CD4-positive, alpha-beta memory T cell (primary cell): ENCODE measurements at regions of chr3 and their contacts with region 1.

Region 1: GRCh38 chr3:41961750-41962679 is at the start of gene ULK4:
- DNase-seq: peak; percentile 95 to 97 (median 96)
- H3K4me3 ChIP-seq: peak within 1 kb of the TSS; percentile 59 to 93
- H3K4me3 Mint-ChIP-seq: peak within 1 kb of the TSS; percentile 99 to 100 (median 99)
- H3K27ac ChIP-seq: peak within 1 kb of the TSS; percentile 82
- H3K27ac Mint-ChIP-seq: peak within 1 kb of the TSS; percentile 97 to 99 (median 99)
- H3K4me1 ChIP-seq: peaks cover 15% of the 10 kb centered on the region
- H3K4me1 Mint-ChIP-seq: peaks cover 14 to 28% (median 21%) of the 10 kb centered on the region in 4 donors
- H3K27me3 ChIP-seq: no peaks in the 10 kb centered on the region
- H3K27me3 Mint-ChIP-seq: no peaks in the 10 kb centered on the region
- total RNA-seq, gene ULK4: 27.4 to 29.1 TPM

Region 2: GRCh38 chr3:40309418-40309924 is 1652.5 kb before region 1 on chr3 and contains the start of gene EIF1B:
- CTCF ChIA-PET with region 1: no interaction called
- POLR2A ChIA-PET with region 1: interaction called, 5 read pairs
- intact Hi-C with region 1: loop called (anchors 1 kb)
- DNase-seq: peak; percentile 96 to 99 (median 98)
- H3K4me3 ChIP-seq: peak within 1 kb of the TSS; percentile 68 to 77
- H3K4me3 Mint-ChIP-seq: peak within 1 kb of the TSS; percentile 98 to 100 (median 100)
- H3K27ac ChIP-seq: peak within 1 kb of the TSS; percentile 95
- H3K27ac Mint-ChIP-seq: peak within 1 kb of the TSS; percentile 99 to 100 (median 100)
- H3K4me1 ChIP-seq: peaks cover 32% of the 10 kb centered on the region
- H3K4me1 Mint-ChIP-seq: peaks cover 13 to 48% (median 25%) of the 10 kb centered on the region in 4 donors
- H3K27me3 ChIP-seq: no peaks in the 10 kb centered on the region
- H3K27me3 Mint-ChIP-seq: no peaks in the 10 kb centered on the region
- total RNA-seq, gene EIF1B: 61.2 TPM

Region 3: DNA sequence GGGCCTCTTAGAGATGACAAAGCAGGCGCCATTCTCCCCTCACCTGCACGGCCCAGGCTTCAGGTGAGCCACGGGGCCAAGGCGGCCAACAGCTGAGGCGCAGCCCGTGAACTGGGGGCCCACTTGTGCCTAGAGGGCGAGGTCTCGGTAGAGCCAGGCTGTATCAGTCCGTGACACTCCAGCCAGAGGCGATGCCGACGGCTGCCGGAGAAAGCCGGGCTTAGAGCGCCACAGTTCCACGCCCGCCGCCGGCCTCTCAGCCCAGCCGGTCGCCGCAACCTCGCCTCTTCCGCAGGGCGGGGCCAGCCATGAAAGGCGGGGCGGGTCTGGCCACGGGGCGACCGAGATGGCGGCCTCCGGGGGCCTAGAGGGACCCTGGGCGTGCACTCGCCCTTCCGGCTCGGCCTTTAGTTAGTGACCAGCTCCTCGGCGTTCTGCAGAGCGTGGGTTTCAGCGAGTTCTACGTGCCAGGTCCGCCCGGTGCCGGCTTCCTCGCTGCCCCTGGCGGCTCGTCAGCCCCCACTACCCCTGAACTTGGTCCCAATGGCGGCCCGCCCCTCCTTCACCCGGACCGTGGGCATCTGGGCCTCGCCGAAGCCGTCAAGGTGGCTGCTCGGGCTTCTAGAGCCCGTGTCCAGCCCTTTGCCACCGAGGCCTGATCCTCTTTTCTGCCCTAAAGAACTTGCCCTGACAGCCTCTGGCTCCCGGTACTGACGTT is 1437.3 kb before region 1 on chr3 and contains the start of gene ZNF621:
- CTCF ChIA-PET with region 1: no interaction called
- POLR2A ChIA-PET with region 1: no interaction called
- intact Hi-C with region 1: loop called (anchors 5 kb)
- DNase-seq: peak; percentile 67 to 83 (median 77)
- H3K4me3 ChIP-seq: peak within 1 kb of the TSS; percentile 62 to 89
- H3K4me3 Mint-ChIP-seq: peak within 1 kb of the TSS; percentile 92 to 97 (median 95)
- H3K27ac ChIP-seq: peak within 1 kb of the TSS; percentile 75
- H3K27ac Mint-ChIP-seq: peak within 1 kb of the TSS; percentile 79 to 98 (median 97)
- H3K4me1 ChIP-seq: peaks cover 21% of the 10 kb centered on the region
- H3K4me1 Mint-ChIP-seq: peaks cover 19 to 34% (median 28%) of the 10 kb centered on the region in 4 donors
- H3K27me3 ChIP-seq: no peaks in the 10 kb centered on the region
- H3K27me3 Mint-ChIP-seq: no peaks in the 10 kb centered on the region
- total RNA-seq, gene ZNF621: 23.7 to 27.4 TPM

Region 4: DNA sequence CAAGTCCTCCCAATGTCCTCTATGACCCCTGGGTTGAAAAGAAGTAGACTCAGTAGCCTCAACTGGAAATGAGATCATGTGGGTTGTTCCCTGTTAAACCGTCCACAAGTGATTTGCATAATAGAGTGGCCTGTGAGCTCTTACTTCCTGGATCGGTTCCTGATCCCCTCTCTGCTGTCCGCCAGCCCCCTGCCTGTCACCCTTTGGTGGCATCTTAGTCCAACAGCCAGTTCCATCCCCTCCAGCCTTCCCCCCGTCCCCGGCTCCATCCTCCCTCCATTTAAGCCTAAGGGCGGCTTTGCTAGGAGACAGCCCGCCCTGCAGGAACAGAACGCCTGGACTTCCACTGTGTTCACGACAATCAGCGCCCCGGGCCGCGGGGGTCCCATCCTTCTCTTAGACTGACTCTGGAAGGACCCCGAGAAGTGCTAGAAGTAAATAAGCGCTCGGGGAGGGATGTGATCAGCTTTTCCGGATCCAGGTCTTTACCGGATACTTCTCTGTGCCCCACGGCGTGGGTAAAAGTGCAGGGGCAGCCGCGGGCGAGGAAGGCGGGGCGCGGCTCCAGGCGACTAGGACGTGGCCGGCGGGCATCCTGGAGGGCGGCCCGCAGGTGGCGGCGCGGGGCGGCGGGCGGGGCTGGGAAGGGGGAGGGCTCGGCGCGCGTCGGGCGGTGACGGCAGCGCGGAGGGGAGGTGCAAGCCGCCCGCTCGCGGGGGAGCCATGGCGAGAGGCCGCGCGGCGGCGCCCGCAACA is 51.1 kb after region 1 on chr3:
- CTCF ChIA-PET with region 1: no interaction called
- POLR2A ChIA-PET with region 1: interaction called, 19 read pairs
- intact Hi-C with region 1: loop called (anchors 1 kb)
- DNase-seq: peak; percentile 64 to 70 (median 66)
- H3K4me3 ChIP-seq: peak overlapping the region; percentile 50 to 85
- H3K4me3 Mint-ChIP-seq: peak overlapping the region; percentile 87 to 96 (median 92)
- H3K27ac ChIP-seq: peak overlapping the region; percentile 63
- H3K27ac Mint-ChIP-seq: peak overlapping the region; percentile 95 to 98 (median 97)
- H3K4me1 ChIP-seq: peaks cover 32% of the 10 kb centered on the region
- H3K4me1 Mint-ChIP-seq: peaks cover 24 to 45% (median 36%) of the 10 kb centered on the region in 4 donors
- H3K27me3 ChIP-seq: no peaks in the 10 kb centered on the region
- H3K27me3 Mint-ChIP-seq: no peaks in the 10 kb centered on the region

Region 5: GRCh38 chr3:42101048-42101447 is 139.0 kb after region 1 on chr3:
- CTCF ChIA-PET with region 1: interaction called, 5 read pairs
- POLR2A ChIA-PET with region 1: interaction called, 6 read pairs
- intact Hi-C with region 1: loop called (anchors 1 kb)
- DNase-seq: no peak
- H3K4me3 ChIP-seq: no peak overlapping the region
- H3K4me3 Mint-ChIP-seq: no peak overlapping the region
- H3K27ac ChIP-seq: no peak overlapping the region
- H3K27ac Mint-ChIP-seq: no peak overlapping the region
- H3K4me1 ChIP-seq: no peaks in the 10 kb centered on the region
- H3K4me1 Mint-ChIP-seq: peaks cover 0 to 3% (median 2%) of the 10 kb centered on the region in 4 donors
- H3K27me3 ChIP-seq: no peaks in the 10 kb centered on the region
- H3K27me3 Mint-ChIP-seq: no peaks in the 10 kb centered on the region

Region 6: DNA sequence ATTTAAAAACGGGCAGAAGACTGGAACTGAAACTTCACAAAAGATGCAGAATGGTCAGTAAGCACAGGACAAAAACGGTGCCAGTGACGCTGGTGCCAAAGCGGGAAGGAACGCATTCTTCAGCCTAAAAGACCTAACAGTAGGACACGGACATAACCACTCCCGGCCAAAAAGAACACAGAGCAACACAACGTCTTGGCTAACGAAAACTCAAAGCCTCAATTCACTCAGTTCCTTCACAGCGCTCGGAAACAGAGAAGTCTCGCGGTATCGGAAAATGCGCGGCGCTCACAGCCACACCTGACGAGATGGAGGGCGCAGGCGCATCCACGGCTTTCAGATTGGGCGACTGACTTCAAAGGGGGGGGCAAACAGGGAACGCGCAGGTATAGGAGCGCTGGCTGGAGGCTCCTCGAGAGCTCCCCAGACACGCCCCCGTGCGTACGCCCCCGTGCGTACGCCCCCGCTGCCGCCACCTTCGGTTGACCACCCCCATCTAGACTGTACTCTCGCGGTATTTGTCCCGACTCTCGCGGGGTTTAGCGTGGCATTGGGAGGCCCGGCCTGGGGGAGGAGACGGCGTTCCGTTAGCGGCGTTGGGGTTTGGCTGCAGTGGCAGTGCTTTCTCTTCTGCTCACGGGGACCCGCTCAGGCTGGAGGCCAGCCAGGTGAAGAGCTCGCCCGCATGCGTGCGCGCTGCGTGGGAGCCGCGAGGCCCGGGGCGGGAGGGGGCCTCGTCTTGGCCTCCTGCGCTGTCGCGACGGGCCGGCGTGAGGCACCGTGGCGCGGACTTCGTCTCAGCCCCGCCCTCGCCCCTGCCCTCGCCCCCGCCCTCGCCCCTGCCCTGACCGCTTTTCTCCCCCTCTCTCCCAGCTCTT is 638.3 kb after region 1 on chr3 and contains the start of gene NKTR:
- CTCF ChIA-PET with region 1: no interaction called
- POLR2A ChIA-PET with region 1: no interaction called
- intact Hi-C with region 1: loop called (anchors 5 kb)
- DNase-seq: peak; percentile 99 to 100 (median 100)
- H3K4me3 ChIP-seq: peak within 1 kb of the TSS; percentile 76 to 88
- H3K4me3 Mint-ChIP-seq: peak within 1 kb of the TSS; percentile 91 to 97 (median 94)
- H3K27ac ChIP-seq: peak within 1 kb of the TSS; percentile 85
- H3K27ac Mint-ChIP-seq: peak within 1 kb of the TSS; percentile 94 to 99 (median 98)
- H3K4me1 ChIP-seq: peaks cover 39% of the 10 kb centered on the region
- H3K4me1 Mint-ChIP-seq: peaks cover 27 to 49% (median 36%) of the 10 kb centered on the region in 4 donors
- H3K27me3 ChIP-seq: no peaks in the 10 kb centered on the region
- H3K27me3 Mint-ChIP-seq: no peaks in the 10 kb centered on the region
- total RNA-seq, gene NKTR: 256 to 269 TPM

Region 7: DNA sequence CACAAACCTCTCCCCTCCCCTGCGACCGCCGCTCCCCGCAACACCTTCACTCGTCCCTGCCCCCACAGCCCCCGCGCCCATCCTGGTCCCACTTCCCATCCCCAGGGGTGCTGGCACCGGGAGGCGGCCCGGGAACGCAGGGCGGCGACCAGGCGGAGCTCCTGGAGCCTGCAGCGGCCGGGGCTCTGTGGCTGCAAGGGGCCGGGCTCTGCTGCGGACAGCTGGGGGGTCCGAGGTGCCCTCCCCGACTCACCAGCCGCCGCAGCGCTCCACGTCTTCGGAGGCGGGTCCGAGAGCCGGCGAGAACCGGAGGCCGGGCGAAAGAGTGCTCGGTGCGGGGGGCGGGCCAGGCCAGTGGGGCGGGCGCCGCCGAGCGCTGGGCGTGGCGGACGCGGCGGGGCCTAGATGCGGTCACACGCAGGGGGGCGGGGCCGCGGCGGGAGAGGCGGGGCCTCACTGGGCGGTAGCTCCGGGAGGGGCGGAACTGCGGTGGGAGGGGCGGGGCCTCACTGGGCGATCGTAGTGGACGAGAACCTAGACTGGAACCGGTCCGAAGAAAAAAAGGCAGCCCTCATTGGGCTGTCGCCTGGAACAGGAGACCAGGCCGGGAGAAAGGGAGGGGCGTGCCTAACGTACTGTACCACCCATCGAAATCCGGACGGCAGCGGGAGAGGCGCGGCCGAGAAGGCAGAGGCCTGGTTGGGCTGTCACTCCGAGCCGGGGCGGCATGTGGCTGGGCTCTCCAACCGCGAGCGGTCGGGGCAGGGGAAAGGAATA is 1659.8 kb after region 1 on chr3 and contains the start of gene ANO10:
- CTCF ChIA-PET with region 1: no interaction called
- POLR2A ChIA-PET with region 1: no interaction called
- intact Hi-C with region 1: loop called (anchors 5 kb)
- DNase-seq: peak; percentile 91 to 93 (median 93)
- H3K4me3 ChIP-seq: peak within 1 kb of the TSS; percentile 36 to 59
- H3K4me3 Mint-ChIP-seq: peak within 1 kb of the TSS; percentile 88 to 94 (median 91)
- H3K27ac ChIP-seq: peak within 1 kb of the TSS; percentile 54
- H3K27ac Mint-ChIP-seq: peak within 1 kb of the TSS; percentile 77 to 96 (median 91)
- H3K4me1 ChIP-seq: peaks cover 12% of the 10 kb centered on the region
- H3K4me1 Mint-ChIP-seq: peaks cover 10 to 24% (median 13%) of the 10 kb centered on the region in 4 donors
- H3K27me3 ChIP-seq: no peaks in the 10 kb centered on the region
- H3K27me3 Mint-ChIP-seq: no peaks in the 10 kb centered on the region
- total RNA-seq, gene ANO10: 9.7 to 9.9 TPM